Motor neuron (in vitro differentiated cells): ENCODE measurements at regions of chr5 and their contacts with region 1.

Region 1: GRCh38 chr5:62143268-62144229 is 162.5 kb upstream of the KIF2A start:
- ATAC-seq: peak; percentile 25 to 77 (median 50)
- H3K4me3 ChIP-seq: no peak overlapping the region
- H3K27ac ChIP-seq: no peak overlapping the region
- H3K4me1 ChIP-seq: peaks cover 0 to 9% of the 10 kb centered on the region in 2 donors

Region 2: GRCh38 chr5:61941637-61942036 is 201.9 kb before region 1 on chr5:
- in situ Hi-C with region 1: loop called in 1 of 9 experiments (anchors 10 kb)
- ATAC-seq: peak in 3 of 8 experiments; percentile 63 to 96 (median 88)
- H3K4me3 ChIP-seq: no peak overlapping the region
- H3K27ac ChIP-seq: no peak overlapping the region
- H3K4me1 ChIP-seq: no peaks in the 10 kb centered on the region